ENCODE measurements at regions of chr12 and their contacts with region 1.

Region 1: DNA sequence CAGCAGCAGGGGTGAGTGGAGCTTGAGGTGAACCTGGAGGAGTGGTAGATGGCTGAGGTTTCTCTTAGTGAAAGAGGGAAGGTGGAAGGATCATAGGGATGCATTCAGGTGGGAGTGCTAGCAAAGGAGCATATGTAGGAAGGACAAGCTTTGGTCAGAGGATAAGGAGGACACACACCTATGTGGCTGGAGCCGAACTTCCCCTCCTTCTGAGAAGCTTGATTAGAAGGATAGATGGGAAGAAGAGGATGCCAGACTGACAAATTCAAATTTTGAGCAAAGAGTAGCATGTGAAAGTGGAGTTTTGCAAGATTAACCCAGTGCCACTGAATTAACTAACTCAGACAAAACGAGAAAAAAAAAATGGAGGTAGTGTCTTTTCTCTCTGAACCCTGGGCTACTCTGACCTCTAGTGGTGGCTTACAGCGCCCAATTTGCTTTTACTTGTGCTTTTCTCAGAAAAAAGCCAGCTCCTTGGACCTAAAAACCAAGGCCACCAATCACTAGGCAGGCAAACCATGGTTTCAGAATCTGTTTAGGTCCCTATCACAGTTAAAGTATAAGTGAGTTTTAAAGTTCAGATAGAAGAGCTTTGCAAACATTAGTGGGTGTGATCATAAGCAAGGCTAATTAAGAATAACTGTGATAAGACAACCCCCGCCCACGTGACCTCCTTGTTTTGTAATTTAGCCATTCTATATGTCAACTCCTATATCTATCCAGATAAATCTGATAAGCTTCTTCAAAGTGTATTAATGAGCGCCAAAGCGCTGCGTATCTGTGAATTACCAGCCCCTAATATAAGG is 15.5 kb downstream of the EMP1 start:
- DNase-seq: peak; percentile 29 to 81 (median 73)
- ATAC-seq: peak; percentile 87
- H3K4me3 ChIP-seq: no peak overlapping the region
- H3K4me3 Mint-ChIP-seq: peak overlapping the region in 1 of 10 donors; percentile 55
- H3K27ac ChIP-seq: no peak overlapping the region
- H3K27ac Mint-ChIP-seq: peak overlapping the region in 3 of 9 donors; percentile 19 to 76 (median 70)
- H3K4me1 ChIP-seq: no peaks in the 10 kb centered on the region
- H3K4me1 Mint-ChIP-seq: peaks cover 5 to 29% (median 7%) of the 10 kb centered on the region in 7 donors
- H3K27me3 ChIP-seq: no peaks in the 10 kb centered on the region
- H3K27me3 Mint-ChIP-seq: peaks cover 0 to 13% (median 0%) of the 10 kb centered on the region in 5 donors

Region 2: GRCh38 chr12:12837025-12837872 is 374.8 kb before region 1 on chr12:
- CTCF ChIA-PET with region 1: interaction called, 11 read pairs
- POLR2A ChIA-PET with region 1: no interaction called
- intact Hi-C with region 1: loop called (anchors 1 kb)
- DNase-seq: peak in 8 of 9 donors; percentile 34 to 68 (median 52)
- ATAC-seq: peak; percentile 80
- H3K4me3 ChIP-seq: no peak overlapping the region
- H3K4me3 Mint-ChIP-seq: peak overlapping the region; percentile 15 to 74 (median 35)
- H3K27ac ChIP-seq: no peak overlapping the region
- H3K27ac Mint-ChIP-seq: peak overlapping the region; percentile 40 to 95 (median 85)
- H3K4me1 ChIP-seq: peaks cover 0 to 26% of the 10 kb centered on the region in 2 donors
- H3K4me1 Mint-ChIP-seq: peaks cover 11 to 37% (median 34%) of the 10 kb centered on the region in 7 donors
- H3K27me3 ChIP-seq: no peaks in the 10 kb centered on the region
- H3K27me3 Mint-ChIP-seq: no peaks in the 10 kb centered on the region

Region 3: GRCh38 chr12:12983420-12984035 is 228.5 kb before region 1 on chr12:
- CTCF ChIA-PET with region 1: no interaction called
- POLR2A ChIA-PET with region 1: no interaction called
- intact Hi-C with region 1: loop called in 1 of 2 experiments (anchors 1 kb)
- DNase-seq: peak in 5 of 9 donors; percentile 4 to 43 (median 19)
- ATAC-seq: peak; percentile 57
- H3K4me3 ChIP-seq: no peak overlapping the region
- H3K4me3 Mint-ChIP-seq: no peak overlapping the region
- H3K27ac ChIP-seq: no peak overlapping the region
- H3K27ac Mint-ChIP-seq: no peak overlapping the region
- H3K4me1 ChIP-seq: no peaks in the 10 kb centered on the region
- H3K4me1 Mint-ChIP-seq: no peaks in the 10 kb centered on the region
- H3K27me3 ChIP-seq: no peaks in the 10 kb centered on the region
- H3K27me3 Mint-ChIP-seq: no peaks in the 10 kb centered on the region

Region 4: GRCh38 chr12:13044002-13044905 is 167.8 kb before region 1 on chr12 and contains the start of gene FAM234B:
- CTCF ChIA-PET with region 1: interaction called, 6 read pairs
- POLR2A ChIA-PET with region 1: no interaction called
- intact Hi-C with region 1: loop called in 1 of 2 experiments (anchors 1 kb)
- DNase-seq: peak; percentile 41 to 77 (median 66)
- ATAC-seq: peak; percentile 95
- H3K4me3 ChIP-seq: peak within 1 kb of the TSS; percentile 89
- H3K4me3 Mint-ChIP-seq: peak within 1 kb of the TSS; percentile 76 to 91 (median 87)
- H3K27ac ChIP-seq: peak within 1 kb of the TSS; percentile 79
- H3K27ac Mint-ChIP-seq: peak within 1 kb of the TSS in 7 of 9 donors; percentile 31 to 79 (median 66)
- H3K4me1 ChIP-seq: peaks cover 0 to 5% of the 10 kb centered on the region in 2 donors
- H3K4me1 Mint-ChIP-seq: peaks cover 5 to 20% (median 14%) of the 10 kb centered on the region in 7 donors
- H3K27me3 ChIP-seq: no peaks in the 10 kb centered on the region
- H3K27me3 Mint-ChIP-seq: peaks cover 0 to 32% (median 5%) of the 10 kb centered on the region in 5 donors
- total RNA-seq, gene FAM234B: 2.7 to 5.8 (median 4.3) TPM

Region 5: GRCh38 chr12:13094347-13094746 is 117.7 kb before region 1 on chr12:
- CTCF ChIA-PET with region 1: interaction called, 125 read pairs
- POLR2A ChIA-PET with region 1: interaction called, 5 read pairs
- intact Hi-C with region 1: loop called (anchors 1 kb)
- DNase-seq: no peak
- ATAC-seq: no peak
- H3K4me3 ChIP-seq: no peak overlapping the region
- H3K4me3 Mint-ChIP-seq: no peak overlapping the region
- H3K27ac ChIP-seq: no peak overlapping the region
- H3K27ac Mint-ChIP-seq: no peak overlapping the region
- H3K4me1 ChIP-seq: peaks cover 0 to 14% of the 10 kb centered on the region in 2 donors
- H3K4me1 Mint-ChIP-seq: peaks cover 12 to 19% (median 18%) of the 10 kb centered on the region in 7 donors
- H3K27me3 ChIP-seq: no peaks in the 10 kb centered on the region
- H3K27me3 Mint-ChIP-seq: peaks cover 0 to 7% (median 0%) of the 10 kb centered on the region in 5 donors

Region 6: DNA sequence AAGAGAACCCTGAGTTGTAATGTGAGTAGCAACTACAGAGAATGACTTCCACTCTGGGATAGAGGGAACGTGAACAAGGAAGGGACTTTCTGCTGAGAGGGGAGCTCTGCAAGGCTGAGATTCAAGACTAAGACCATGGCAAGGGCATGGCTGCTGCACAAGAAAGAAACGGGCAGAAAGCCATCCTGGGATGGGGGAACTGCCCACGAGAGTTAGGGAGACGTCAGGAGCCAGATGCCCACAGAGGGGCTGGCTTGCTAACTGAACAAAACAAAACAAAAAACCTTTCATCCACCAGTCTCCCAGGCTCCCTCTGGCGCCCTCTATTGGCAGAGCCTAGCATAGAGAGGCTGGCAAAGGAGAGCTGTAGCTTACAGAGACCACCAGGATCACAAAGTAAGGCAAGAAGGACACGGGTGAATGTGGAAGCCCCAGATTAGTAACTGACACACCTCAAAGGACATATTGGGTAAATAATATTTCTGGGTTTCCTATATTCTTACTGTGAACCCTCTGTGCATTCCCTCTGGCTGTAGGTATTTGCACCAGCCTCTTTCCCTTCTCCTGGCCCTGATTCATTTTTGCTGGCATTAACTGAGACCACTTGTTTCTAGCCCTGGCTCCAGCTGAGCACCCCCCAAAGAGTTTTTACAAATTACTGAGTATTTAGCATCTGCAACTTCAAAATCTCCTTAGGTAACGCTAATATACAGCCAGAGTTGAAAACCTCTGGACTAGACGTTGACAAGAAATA is 322.8 kb after region 1 on chr12:
- CTCF ChIA-PET with region 1: no interaction called
- POLR2A ChIA-PET with region 1: no interaction called
- intact Hi-C with region 1: no loop called
- DNase-seq: peak in 1 of 9 donors; percentile 46
- ATAC-seq: no peak
- H3K4me3 ChIP-seq: no peak overlapping the region
- H3K4me3 Mint-ChIP-seq: no peak overlapping the region
- H3K27ac ChIP-seq: no peak overlapping the region
- H3K27ac Mint-ChIP-seq: no peak overlapping the region
- H3K4me1 ChIP-seq: no peaks in the 10 kb centered on the region
- H3K4me1 Mint-ChIP-seq: peaks cover 0 to 2% (median 0%) of the 10 kb centered on the region in 7 donors
- H3K27me3 ChIP-seq: no peaks in the 10 kb centered on the region
- H3K27me3 Mint-ChIP-seq: peaks cover 6 to 28% (median 13%) of the 10 kb centered on the region in 5 donors